T-cell (primary cell): ENCODE measurements at regions of chr9 and their contacts with region 1.

Region 1: GRCh38 chr9:76018235-76018634 is 127.8 kb downstream of the PCSK5 start:
- DNase-seq: peak in 10 of 35 experiments; percentile 2 to 31 (median 9)
- ATAC-seq: peak in 2 of 4 experiments; percentile 20 to 82
- H3K4me3 ChIP-seq: no peak overlapping the region
- H3K4me3 Mint-ChIP-seq: peak overlapping the region in 2 of 3 donors; percentile 26 to 47
- H3K27ac ChIP-seq: peak overlapping the region; percentile 3
- H3K27ac Mint-ChIP-seq: peak overlapping the region; percentile 71 to 81
- H3K4me1 ChIP-seq: peaks cover 29 to 54% of the 10 kb centered on the region in 2 experiments
- H3K4me1 Mint-ChIP-seq: peaks cover 62 to 85% (median 73%) of the 10 kb centered on the region in 3 donors
- H3K27me3 ChIP-seq: no peaks in the 10 kb centered on the region
- H3K27me3 Mint-ChIP-seq: no peaks in the 10 kb centered on the region

Region 2: DNA sequence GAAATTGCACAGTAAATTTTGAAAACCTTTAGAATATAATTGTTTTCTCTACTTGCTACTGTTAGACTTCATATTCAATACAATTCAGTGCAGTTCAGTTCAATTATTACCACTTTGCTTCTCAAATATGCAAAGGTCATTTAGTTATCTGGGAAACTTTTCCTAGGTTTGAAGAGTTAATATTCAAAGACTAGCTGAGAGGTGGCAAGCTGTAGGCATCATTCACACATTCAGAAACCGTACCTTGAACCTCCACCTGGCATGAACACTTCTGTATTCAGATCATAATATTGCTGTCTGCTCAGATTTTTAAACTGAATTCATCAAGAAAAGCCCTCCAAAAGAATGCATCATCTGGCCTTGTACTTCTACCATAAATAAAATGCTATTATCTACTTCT is 289.8 kb before region 1 on chr9:
- CTCF ChIA-PET with region 1: no interaction called
- POLR2A ChIA-PET with region 1: interaction called in 1 of 2 experiments, 12 read pairs
- DNase-seq: no peak
- ATAC-seq: no peak
- H3K4me3 ChIP-seq: no peak overlapping the region
- H3K4me3 Mint-ChIP-seq: no peak overlapping the region
- H3K27ac ChIP-seq: no peak overlapping the region
- H3K27ac Mint-ChIP-seq: no peak overlapping the region
- H3K4me1 ChIP-seq: no peaks in the 10 kb centered on the region
- H3K4me1 Mint-ChIP-seq: no peaks in the 10 kb centered on the region
- H3K27me3 ChIP-seq: no peaks in the 10 kb centered on the region
- H3K27me3 Mint-ChIP-seq: peaks cover 3 to 10% of the 10 kb centered on the region in 2 donors

Region 3: GRCh38 chr9:76114144-76114543 is 95.9 kb after region 1 on chr9:
- CTCF ChIA-PET with region 1: no interaction called
- POLR2A ChIA-PET with region 1: no interaction called
- DNase-seq: no peak
- ATAC-seq: no peak
- H3K4me3 ChIP-seq: no peak overlapping the region
- H3K4me3 Mint-ChIP-seq: no peak overlapping the region
- H3K27ac ChIP-seq: no peak overlapping the region
- H3K27ac Mint-ChIP-seq: no peak overlapping the region
- H3K4me1 ChIP-seq: peaks cover 0 to 2% of the 10 kb centered on the region in 2 experiments
- H3K4me1 Mint-ChIP-seq: no peaks in the 10 kb centered on the region
- H3K27me3 ChIP-seq: no peaks in the 10 kb centered on the region
- H3K27me3 Mint-ChIP-seq: no peaks in the 10 kb centered on the region